Ovary (tissue), 10 donors: ENCODE measurements at regions of chr1 and their contacts with region 1.

Region 1: GRCh38 chr1:95023399-95024043 is 49.2 kb downstream of the ALG14 start:
- DNase-seq: peak in 1 of 5 donors; percentile 39
- H3K4me3 ChIP-seq: no peak overlapping the region
- H3K27ac ChIP-seq: peak overlapping the region; percentile 63 to 68
- H3K4me1 ChIP-seq: no peaks in the 10 kb centered on the region
- H3K27me3 ChIP-seq: no peaks in the 10 kb centered on the region
- CTCF ChIP-seq: no peak
- EP300 ChIP-seq: no peak
- POLR2A ChIP-seq: no peak

Region 2: DNA sequence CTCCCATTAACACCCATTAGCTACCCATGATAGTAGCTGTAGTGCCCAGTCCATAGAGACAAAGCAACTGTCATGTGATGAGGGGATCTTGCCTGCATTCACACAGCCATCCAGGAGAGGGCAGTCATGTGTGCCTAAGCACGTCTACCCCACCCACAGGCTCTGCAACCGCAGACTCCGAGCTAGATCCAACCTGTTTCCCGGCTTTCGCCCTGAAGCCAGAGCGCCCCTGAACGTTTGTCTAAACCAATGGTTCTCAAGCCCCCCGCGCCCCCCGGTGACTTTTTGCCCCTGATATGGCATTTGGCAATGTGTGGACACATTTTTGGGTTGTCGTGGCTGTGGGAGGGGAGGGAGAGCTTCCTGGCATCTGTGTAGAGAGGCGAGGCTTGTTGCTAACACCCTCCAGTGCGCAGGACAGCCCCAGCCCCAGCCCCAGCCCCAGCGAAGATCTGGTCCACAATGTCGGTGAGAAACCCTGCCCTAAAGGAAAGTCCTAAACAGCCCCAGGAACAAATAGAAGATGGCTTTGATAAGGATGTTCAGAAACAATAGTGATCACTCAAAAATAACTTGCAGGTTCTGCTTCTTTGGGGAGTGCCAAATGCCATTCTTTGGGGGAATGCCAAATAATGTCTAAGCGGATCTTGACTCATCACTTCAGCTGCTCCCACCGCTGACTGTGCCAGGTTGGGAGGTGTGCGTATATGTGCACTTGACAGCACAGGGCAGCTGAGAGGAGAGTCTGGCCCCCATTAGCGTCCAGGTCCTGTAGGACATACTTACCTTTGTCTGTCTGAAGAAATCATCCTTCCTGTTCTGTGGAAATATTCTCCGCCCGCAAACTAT is 168.8 kb before region 1 on chr1:
- intact Hi-C with region 1: loop called in 1 of 4 experiments (anchors 5 kb)
- DNase-seq: peak; percentile 87 to 92 (median 90)
- H3K4me3 ChIP-seq: peak overlapping the region; percentile 40
- H3K27ac ChIP-seq: peak overlapping the region in 1 of 2 donors; percentile 50
- H3K4me1 ChIP-seq: peaks cover 6% of the 10 kb centered on the region
- H3K27me3 ChIP-seq: no peaks in the 10 kb centered on the region
- CTCF ChIP-seq: peak; percentile 87 to 98 (median 98)
- EP300 ChIP-seq: no peak
- POLR2A ChIP-seq: no peak

Region 3: GRCh38 chr1:94863919-94864318 is 159.6 kb before region 1 on chr1:
- intact Hi-C with region 1: loop called in 1 of 4 experiments (anchors 5 kb)
- DNase-seq: peak; percentile 46 to 83 (median 64)
- H3K4me3 ChIP-seq: peak overlapping the region; percentile 4
- H3K27ac ChIP-seq: peak overlapping the region; percentile 73 to 96
- H3K4me1 ChIP-seq: peaks cover 18% of the 10 kb centered on the region
- H3K27me3 ChIP-seq: no peaks in the 10 kb centered on the region
- CTCF ChIP-seq: peak in 1 of 3 donors; percentile 23
- EP300 ChIP-seq: peak; percentile 94
- POLR2A ChIP-seq: peak; percentile 36